ENCODE measurements at regions of chr6 and their contacts with region 1.

Region 1: DNA sequence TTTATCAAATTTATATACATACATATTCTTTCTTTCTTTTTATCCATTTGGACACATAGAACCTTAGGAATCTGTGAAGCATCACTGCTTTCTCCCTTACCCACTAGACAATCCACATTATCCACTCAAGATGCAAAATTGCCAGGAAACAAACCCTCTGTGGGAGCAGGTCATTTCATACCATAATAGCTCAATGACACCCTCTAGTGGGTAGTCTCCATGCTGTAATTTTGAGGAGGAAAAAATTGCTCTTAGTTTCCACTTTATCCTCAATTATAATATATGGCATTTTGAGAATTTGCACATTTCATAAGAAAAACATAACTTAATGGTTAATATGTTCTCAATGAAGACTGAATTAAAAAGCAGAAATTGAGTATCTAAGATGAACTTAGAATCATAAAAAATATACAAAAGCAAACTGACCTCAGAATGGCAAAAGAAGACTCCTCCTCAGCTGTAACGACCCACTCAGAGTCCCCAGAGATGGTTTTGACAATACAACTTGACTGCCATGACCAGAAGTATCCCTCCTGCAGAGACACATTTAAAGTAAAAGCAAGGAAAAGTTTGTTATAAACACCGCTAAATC is 164.1 kb downstream of the FRK start:
- DNase-seq: no peak
- ATAC-seq: peak; percentile 45
- H3K4me3 ChIP-seq: no peak overlapping the region
- H3K27ac ChIP-seq: no peak overlapping the region
- H3K4me1 ChIP-seq: peaks cover 13% of the 10 kb centered on the region
- H3K27me3 ChIP-seq: no peaks in the 10 kb centered on the region
- CTCF ChIP-seq: peak; percentile 72 to 79 (median 74)
- EP300 ChIP-seq: no peak
- POLR2A ChIP-seq: no peak
- RAD21 ChIP-seq: peak; percentile 91

Region 2: GRCh38 chr6:114390176-114390575 is 1506.5 kb before region 1 on chr6:
- CTCF ChIA-PET with region 1: no interaction called
- POLR2A ChIA-PET with region 1: no interaction called
- RAD21 ChIA-PET with region 1: no interaction called
- SMC1A ChIA-PET with region 1: no interaction called
- in situ Hi-C with region 1: no loop called
- intact Hi-C with region 1: no loop called
- DNase-seq: no peak
- ATAC-seq: no peak
- H3K4me3 ChIP-seq: no peak overlapping the region
- H3K27ac ChIP-seq: no peak overlapping the region
- H3K4me1 ChIP-seq: no peaks in the 10 kb centered on the region
- H3K27me3 ChIP-seq: no peaks in the 10 kb centered on the region
- CTCF ChIP-seq: no peak
- EP300 ChIP-seq: no peak
- POLR2A ChIP-seq: no peak
- RAD21 ChIP-seq: no peak

Region 3: GRCh38 chr6:114747987-114748630 is 1148.5 kb before region 1 on chr6:
- CTCF ChIA-PET with region 1: interaction called, 3 read pairs
- POLR2A ChIA-PET with region 1: no interaction called
- RAD21 ChIA-PET with region 1: interaction called, 5 read pairs
- SMC1A ChIA-PET with region 1: interaction called, 4 read pairs
- in situ Hi-C with region 1: loop called (anchors 5 kb)
- intact Hi-C with region 1: loop called (anchors 1 kb)
- DNase-seq: no peak
- ATAC-seq: peak; percentile 75
- H3K4me3 ChIP-seq: no peak overlapping the region
- H3K27ac ChIP-seq: no peak overlapping the region
- H3K4me1 ChIP-seq: no peaks in the 10 kb centered on the region
- H3K27me3 ChIP-seq: no peaks in the 10 kb centered on the region
- CTCF ChIP-seq: peak; percentile 64 to 67 (median 66)
- EP300 ChIP-seq: no peak
- POLR2A ChIP-seq: no peak
- RAD21 ChIP-seq: peak; percentile 76

Region 4: GRCh38 chr6:115058414-115059211 is 838.0 kb before region 1 on chr6:
- CTCF ChIA-PET with region 1: no interaction called
- POLR2A ChIA-PET with region 1: no interaction called
- RAD21 ChIA-PET with region 1: no interaction called
- SMC1A ChIA-PET with region 1: no interaction called
- in situ Hi-C with region 1: no loop called
- intact Hi-C with region 1: loop called (anchors 10 kb)
- DNase-seq: no peak
- ATAC-seq: peak; percentile 84
- H3K4me3 ChIP-seq: no peak overlapping the region
- H3K27ac ChIP-seq: no peak overlapping the region
- H3K4me1 ChIP-seq: no peaks in the 10 kb centered on the region
- H3K27me3 ChIP-seq: no peaks in the 10 kb centered on the region
- CTCF ChIP-seq: no peak
- EP300 ChIP-seq: peak in 1 of 2 experiments; percentile 21; a peak in 2 of 4 replicates
- POLR2A ChIP-seq: no peak
- RAD21 ChIP-seq: no peak

Region 5: GRCh38 chr6:115441651-115442050 is 455.0 kb before region 1 on chr6:
- CTCF ChIA-PET with region 1: no interaction called
- POLR2A ChIA-PET with region 1: no interaction called
- RAD21 ChIA-PET with region 1: no interaction called
- SMC1A ChIA-PET with region 1: no interaction called
- in situ Hi-C with region 1: no loop called
- intact Hi-C with region 1: loop called (anchors 10 kb)
- DNase-seq: no peak
- ATAC-seq: no peak
- H3K4me3 ChIP-seq: no peak overlapping the region
- H3K27ac ChIP-seq: no peak overlapping the region
- H3K4me1 ChIP-seq: no peaks in the 10 kb centered on the region
- H3K27me3 ChIP-seq: no peaks in the 10 kb centered on the region
- CTCF ChIP-seq: no peak
- EP300 ChIP-seq: no peak
- POLR2A ChIP-seq: no peak
- RAD21 ChIP-seq: no peak

Region 6: GRCh38 chr6:115575285-115575684 is 321.3 kb before region 1 on chr6:
- CTCF ChIA-PET with region 1: no interaction called
- POLR2A ChIA-PET with region 1: no interaction called
- RAD21 ChIA-PET with region 1: no interaction called
- SMC1A ChIA-PET with region 1: no interaction called
- in situ Hi-C with region 1: no loop called
- intact Hi-C with region 1: loop called (anchors 5 kb)
- DNase-seq: no peak
- ATAC-seq: no peak
- H3K4me3 ChIP-seq: no peak overlapping the region
- H3K27ac ChIP-seq: no peak overlapping the region
- H3K4me1 ChIP-seq: no peaks in the 10 kb centered on the region
- H3K27me3 ChIP-seq: no peaks in the 10 kb centered on the region
- CTCF ChIP-seq: no peak
- EP300 ChIP-seq: no peak
- POLR2A ChIP-seq: no peak
- RAD21 ChIP-seq: no peak